Panc1 (cell line): ENCODE measurements at regions of chr19 and their contacts with region 1.

Region 1: DNA sequence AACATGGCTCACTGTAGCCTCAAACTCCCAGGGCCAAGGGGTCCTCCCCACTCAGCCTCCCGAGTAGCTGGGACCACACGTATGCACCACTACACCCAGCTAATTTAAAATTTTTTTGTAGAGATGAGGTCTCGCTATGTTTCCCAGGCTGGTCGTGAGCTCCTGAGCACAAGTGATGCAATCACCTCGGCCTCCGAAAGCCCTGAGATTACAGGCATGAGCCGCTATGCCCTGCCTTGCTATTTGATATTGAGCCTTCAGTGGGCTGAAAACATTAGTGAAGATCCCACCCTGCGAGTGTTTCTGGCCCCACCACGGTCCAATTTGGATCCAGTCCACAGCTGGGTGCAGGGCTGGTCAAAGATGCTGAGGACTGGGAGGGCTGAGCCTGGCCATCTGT is 65.9 kb downstream of the TRPM4 start:
- DNase-seq: no peak
- ATAC-seq: no peak
- H3K4me3 ChIP-seq: no peak overlapping the region
- H3K27ac ChIP-seq: no peak overlapping the region
- H3K4me1 ChIP-seq: no peaks in the 10 kb centered on the region
- H3K27me3 ChIP-seq: no peaks in the 10 kb centered on the region
- CTCF ChIP-seq: no peak

Region 2: GRCh38 chr19:49017666-49018351 is 205.7 kb before region 1 on chr19:
- CTCF ChIA-PET with region 1: no interaction called
- POLR2A ChIA-PET with region 1: interaction called, 13 read pairs
- in situ Hi-C with region 1: no loop called
- intact Hi-C with region 1: no loop called
- DNase-seq: no peak
- ATAC-seq: peak; percentile 87
- H3K4me3 ChIP-seq: peak overlapping the region; percentile 43 to 51
- H3K27ac ChIP-seq: peak overlapping the region; percentile 72
- H3K4me1 ChIP-seq: no peaks in the 10 kb centered on the region; the same call in 1 of the 2 replicates
- H3K27me3 ChIP-seq: no peaks in the 10 kb centered on the region
- CTCF ChIP-seq: peak; percentile 69